Endothelial cell of umbilical vein (primary cell): ENCODE measurements at regions of chr20 and their contacts with region 1.

Region 1: GRCh38 chr20:44582311-44583025 is at the start of gene PKIG:
- DNase-seq: peak; percentile 96
- H3K4me3 ChIP-seq: peak within 1 kb of the TSS; percentile 48 to 94 (median 84)
- H3K27ac ChIP-seq: peak within 1 kb of the TSS; percentile 96
- H3K4me1 ChIP-seq: peaks cover 83% of the 10 kb centered on the region
- H3K27me3 ChIP-seq: no peaks in the 10 kb centered on the region
- CTCF ChIP-seq: no peak
- POLR2A ChIP-seq: peak; percentile 84
- total RNA-seq, gene PKIG: 127 and 135 TPM in 2 replicates

Region 2: DNA sequence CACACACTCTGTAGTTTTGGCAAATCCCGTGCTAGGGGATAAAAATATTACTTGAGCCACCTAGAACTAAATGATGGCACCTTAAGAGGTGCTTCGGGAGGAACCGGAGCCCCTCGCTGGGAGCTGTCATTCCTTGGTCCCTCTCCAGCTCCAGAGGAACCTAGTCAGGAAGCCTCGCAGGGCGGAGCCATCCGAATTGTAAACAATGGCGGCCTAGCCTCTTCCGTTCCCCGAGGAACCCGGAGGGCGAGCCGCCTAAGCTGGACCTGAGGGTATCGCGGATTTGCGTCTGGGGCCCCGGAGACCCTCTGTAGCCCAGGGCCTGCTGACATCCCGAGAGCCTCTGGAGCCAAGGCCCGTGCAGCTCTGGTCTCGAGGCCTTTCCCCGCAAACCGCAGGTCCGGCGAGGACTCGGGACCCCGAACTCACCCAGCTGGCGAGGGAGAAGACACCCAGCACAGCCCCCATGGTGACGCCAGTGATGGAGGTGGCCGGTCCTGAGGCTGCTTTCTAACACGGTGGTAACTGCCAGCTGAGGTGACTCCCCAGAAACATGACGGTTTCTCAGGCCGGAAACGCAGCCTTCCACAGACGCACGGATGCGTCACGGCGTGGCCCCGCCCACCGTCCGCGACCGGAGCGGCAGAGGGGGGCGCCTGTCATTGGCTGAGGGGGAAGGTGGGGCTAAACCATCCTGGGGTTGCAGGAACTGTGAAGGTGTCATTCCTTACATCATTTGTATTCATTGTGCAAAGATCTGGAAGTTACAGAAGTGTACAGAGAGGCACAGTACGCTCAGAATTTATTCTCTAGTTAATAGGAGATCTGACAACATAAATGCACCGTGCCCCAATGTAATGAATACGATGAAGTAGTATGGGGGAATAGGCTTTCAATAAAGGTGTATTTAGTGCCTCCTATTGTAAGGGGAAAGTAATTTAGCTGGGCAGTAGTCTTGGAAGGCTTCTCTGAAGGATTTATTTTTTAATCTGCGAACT is 60.7 kb before region 1 on chr20 and contains the start of gene SERINC3:
- CTCF ChIA-PET with region 1: no interaction called
- POLR2A ChIA-PET with region 1: no interaction called
- dilution Hi-C with region 1: no loop called
- intact Hi-C with region 1: loop called (anchors 2 kb)
- DNase-seq: peak; percentile 96
- H3K4me3 ChIP-seq: peak within 1 kb of the TSS; percentile 25 to 86 (median 78)
- H3K27ac ChIP-seq: peak within 1 kb of the TSS; percentile 90
- H3K4me1 ChIP-seq: peaks cover 33% of the 10 kb centered on the region
- H3K27me3 ChIP-seq: no peaks in the 10 kb centered on the region
- CTCF ChIP-seq: peak in 1 of 2 donors; percentile 0
- POLR2A ChIP-seq: peak; percentile 82
- total RNA-seq, gene SERINC3: 83.7 TPM in 2 replicates

Region 3: GRCh38 chr20:44552950-44553908 is 29.2 kb before region 1 on chr20:
- CTCF ChIA-PET with region 1: interaction called, 4 read pairs
- POLR2A ChIA-PET with region 1: no interaction called
- dilution Hi-C with region 1: no loop called
- intact Hi-C with region 1: loop called (anchors 1 kb)
- DNase-seq: peak; percentile 92
- H3K4me3 ChIP-seq: no peak overlapping the region
- H3K27ac ChIP-seq: peak overlapping the region; percentile 85
- H3K4me1 ChIP-seq: peaks cover 37% of the 10 kb centered on the region
- H3K27me3 ChIP-seq: no peaks in the 10 kb centered on the region
- CTCF ChIP-seq: no peak
- POLR2A ChIP-seq: no peak

Region 4: DNA sequence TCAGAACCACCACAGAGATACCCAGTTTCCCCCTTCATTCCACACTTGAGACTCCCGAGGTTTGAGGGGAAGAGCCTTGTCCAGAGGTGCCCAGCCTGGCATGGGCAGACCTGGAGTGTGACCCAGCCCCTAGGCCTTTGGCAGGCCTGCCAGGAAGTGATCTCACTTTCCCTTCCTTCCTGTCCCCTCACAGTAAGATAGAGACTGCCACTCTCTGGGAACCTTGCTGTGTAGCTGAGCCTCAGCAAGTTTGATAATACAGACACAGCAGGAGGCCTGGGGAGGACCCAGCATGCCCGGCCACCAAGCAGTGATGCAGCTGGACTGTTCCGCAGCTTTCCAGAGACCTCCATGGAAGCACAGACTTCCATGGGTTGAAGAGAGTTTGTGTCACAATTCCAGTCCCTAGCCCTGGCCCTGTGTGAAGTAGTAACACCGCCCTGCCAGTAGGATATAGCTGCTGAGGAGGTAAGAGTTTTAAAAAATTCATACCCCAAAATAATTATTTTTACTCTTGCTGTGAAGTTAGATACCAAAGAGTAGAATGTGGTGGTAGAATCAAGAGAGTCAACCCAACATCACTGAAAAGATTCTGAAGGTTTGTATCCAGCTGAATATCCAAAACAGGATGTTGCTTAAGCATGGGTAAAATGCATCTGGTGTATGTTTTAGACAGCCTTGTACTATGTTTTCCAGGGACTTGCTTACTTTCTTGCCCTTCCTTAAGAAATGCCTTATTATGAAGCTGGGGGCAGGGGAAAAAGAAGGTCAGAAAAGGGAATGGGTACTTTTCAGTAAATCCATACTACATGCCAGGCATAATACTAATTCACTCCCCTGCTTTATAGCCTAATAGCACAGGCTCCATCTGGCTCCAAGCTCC is 16.2 kb after region 1 on chr20:
- CTCF ChIA-PET with region 1: interaction called, 17 read pairs
- POLR2A ChIA-PET with region 1: interaction called, 7 read pairs
- dilution Hi-C with region 1: no loop called
- intact Hi-C with region 1: loop called (anchors 1 kb)
- DNase-seq: peak; percentile 71
- H3K4me3 ChIP-seq: no peak overlapping the region
- H3K27ac ChIP-seq: peak overlapping the region; percentile 81
- H3K4me1 ChIP-seq: peaks cover 79% of the 10 kb centered on the region
- H3K27me3 ChIP-seq: no peaks in the 10 kb centered on the region
- CTCF ChIP-seq: peak; percentile 13 to 24
- POLR2A ChIP-seq: no peak

Region 5: GRCh38 chr20:44642203-44643153 is 60.0 kb after region 1 on chr20:
- CTCF ChIA-PET with region 1: no interaction called
- POLR2A ChIA-PET with region 1: no interaction called
- dilution Hi-C with region 1: no loop called
- intact Hi-C with region 1: loop called (anchors 2 kb)
- DNase-seq: peak; percentile 89
- H3K4me3 ChIP-seq: no peak overlapping the region
- H3K27ac ChIP-seq: peak overlapping the region; percentile 98
- H3K4me1 ChIP-seq: peaks cover 48% of the 10 kb centered on the region
- H3K27me3 ChIP-seq: no peaks in the 10 kb centered on the region
- CTCF ChIP-seq: no peak
- POLR2A ChIP-seq: peak; percentile 21